ENCODE measurements at regions of chr12 and their contacts with region 1.

Region 1: DNA sequence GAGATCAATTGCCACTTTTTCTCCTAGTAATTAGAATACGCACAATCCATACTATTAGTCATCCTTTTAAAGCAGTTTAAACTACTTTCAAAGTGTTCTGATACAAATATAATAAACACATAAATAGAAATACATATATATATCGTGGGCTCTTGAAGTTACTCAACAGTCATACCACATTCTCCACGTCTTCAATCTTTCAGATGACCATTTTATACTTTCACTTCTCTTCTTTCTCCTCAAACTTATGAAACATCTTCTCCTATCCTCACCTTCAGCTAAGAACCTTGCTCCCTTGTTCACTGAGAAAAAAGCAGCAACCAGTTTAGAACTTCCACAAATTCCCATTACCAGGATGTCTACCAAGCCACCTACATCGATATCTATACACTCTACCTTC is 19.2 kb downstream of the CEP290 start:
- DNase-seq: no peak
- H3K4me3 ChIP-seq: no peak overlapping the region
- H3K27ac ChIP-seq: no peak overlapping the region
- H3K4me1 ChIP-seq: no peaks in the 10 kb centered on the region
- H3K27me3 ChIP-seq: no peaks in the 10 kb centered on the region
- CTCF ChIP-seq: no peak

Region 2: GRCh38 chr12:87930033-87930432 is 192.6 kb before region 1 on chr12:
- CTCF ChIA-PET with region 1: no interaction called
- POLR2A ChIA-PET with region 1: no interaction called
- intact Hi-C with region 1: no loop called
- DNase-seq: no peak
- H3K4me3 ChIP-seq: no peak overlapping the region
- H3K27ac ChIP-seq: no peak overlapping the region
- H3K4me1 ChIP-seq: no peaks in the 10 kb centered on the region
- H3K27me3 ChIP-seq: no peaks in the 10 kb centered on the region
- CTCF ChIP-seq: no peak

Region 3: GRCh38 chr12:89571491-89572195 is 1449.0 kb after region 1 on chr12:
- CTCF ChIA-PET with region 1: no interaction called
- POLR2A ChIA-PET with region 1: interaction called, 39 read pairs
- intact Hi-C with region 1: no loop called
- DNase-seq: no peak
- H3K4me3 ChIP-seq: no peak overlapping the region
- H3K27ac ChIP-seq: no peak overlapping the region
- H3K4me1 ChIP-seq: no peaks in the 10 kb centered on the region
- H3K27me3 ChIP-seq: no peaks in the 10 kb centered on the region
- CTCF ChIP-seq: no peak